IMR-90 (cell line): ENCODE measurements at regions of chr2 and their contacts with region 1.

Region 1: DNA sequence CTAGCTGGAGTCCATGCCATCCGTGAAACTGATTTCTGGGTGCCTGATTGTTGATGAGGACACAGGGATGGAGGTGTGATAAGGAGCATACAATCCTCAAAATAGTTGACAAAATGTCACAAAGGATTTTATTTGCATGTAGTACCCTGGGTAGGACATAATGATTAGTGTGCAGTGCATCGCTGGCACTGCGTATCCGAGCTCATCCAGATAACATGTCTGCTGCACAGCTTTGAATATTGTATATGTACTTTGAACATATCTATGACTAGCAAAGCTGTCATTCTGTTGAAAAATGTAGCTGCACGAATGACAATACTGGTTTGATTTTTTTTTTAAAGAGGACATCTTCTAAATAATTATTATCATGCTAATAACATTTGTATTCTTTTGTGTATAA is 529.7 kb upstream of the FANCL start:
- DNase-seq: no peak
- ATAC-seq: no peak
- H3K4me3 ChIP-seq: no peak overlapping the region
- H3K27ac ChIP-seq: no peak overlapping the region
- H3K4me1 ChIP-seq: no peaks in the 10 kb centered on the region
- H3K27me3 ChIP-seq: no peaks in the 10 kb centered on the region
- CTCF ChIP-seq: no peak
- POLR2A ChIP-seq: no peak
- RAD21 ChIP-seq: no peak

Region 2: DNA sequence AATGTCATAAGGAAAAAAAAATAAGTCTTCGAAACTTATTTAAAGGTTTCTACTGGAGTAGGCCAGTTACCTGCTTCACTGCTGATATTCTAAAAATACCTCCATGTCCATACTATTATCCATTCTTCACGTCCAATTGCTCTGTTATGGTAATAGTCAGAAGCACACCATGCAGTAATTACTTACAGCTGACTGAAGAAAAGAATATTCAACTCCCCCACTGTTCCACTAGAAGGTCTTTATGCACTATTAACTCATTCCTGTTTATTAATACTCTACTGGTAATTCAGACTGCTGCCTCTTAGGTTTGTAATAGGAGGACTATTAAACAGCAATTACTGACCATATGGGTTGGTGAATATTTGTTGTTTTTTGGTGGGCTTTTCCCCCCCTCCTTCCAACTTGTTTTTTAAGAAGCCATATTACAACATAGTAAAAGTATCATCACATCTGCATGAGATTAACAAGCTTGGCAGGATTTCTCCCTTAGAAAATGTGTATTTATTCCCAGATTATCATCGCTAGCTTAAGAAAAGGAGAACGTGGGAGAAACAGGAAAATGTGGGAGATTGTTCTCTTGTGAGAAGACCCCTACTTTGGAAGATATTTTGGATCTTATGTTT is 276.6 kb after region 1 on chr2:
- CTCF ChIA-PET with region 1: no interaction called
- POLR2A ChIA-PET with region 1: interaction called, 17 read pairs
- dilution Hi-C with region 1: no loop called
- in situ Hi-C with region 1: no loop called
- intact Hi-C with region 1: no loop called
- DNase-seq: no peak
- ATAC-seq: no peak
- H3K4me3 ChIP-seq: no peak overlapping the region
- H3K27ac ChIP-seq: no peak overlapping the region
- H3K4me1 ChIP-seq: no peaks in the 10 kb centered on the region
- H3K27me3 ChIP-seq: no peaks in the 10 kb centered on the region
- CTCF ChIP-seq: no peak
- POLR2A ChIP-seq: no peak
- RAD21 ChIP-seq: no peak